MCF 10A (cell line): ENCODE measurements at regions of chr18 and their contacts with region 1.

Region 1: DNA sequence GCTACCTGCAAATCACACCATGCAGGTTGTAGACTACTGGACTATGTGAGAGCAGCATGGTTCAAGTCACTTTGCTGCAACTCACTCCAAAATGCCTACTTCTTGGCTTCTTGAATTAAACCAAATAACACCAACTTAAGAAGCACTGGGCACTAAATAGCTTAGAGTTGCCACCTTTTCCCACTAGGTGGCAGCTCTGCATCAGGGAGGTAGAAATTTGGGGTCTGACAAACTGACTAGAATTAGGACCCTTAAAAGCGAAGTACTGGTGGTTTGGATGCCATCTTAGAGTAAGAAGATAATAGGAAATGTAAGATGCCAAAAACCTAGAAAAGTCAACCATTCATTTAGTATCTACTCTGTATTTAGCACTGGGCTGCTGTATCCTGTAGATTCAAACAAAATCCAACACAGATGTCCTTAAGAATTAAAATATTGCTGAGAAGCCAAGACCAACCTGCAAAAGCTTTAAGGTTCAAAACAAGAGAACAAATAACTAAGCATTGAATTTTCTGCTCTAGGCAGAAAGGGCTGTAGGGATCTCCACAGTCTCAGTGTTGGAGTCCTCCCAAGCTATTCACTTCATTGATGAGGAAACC is 65.5 kb downstream of the CCBE1 start:
- DNase-seq: peak; percentile 48
- H3K4me3 Mint-ChIP-seq: no peak overlapping the region
- H3K27ac Mint-ChIP-seq: no peak overlapping the region
- H3K4me1 Mint-ChIP-seq: no peaks in the 10 kb centered on the region
- H3K27me3 Mint-ChIP-seq: peaks cover 14% of the 10 kb centered on the region
- CTCF ChIP-seq: peak; percentile 78

Region 2: GRCh38 chr18:59446012-59446411 is 185.7 kb before region 1 on chr18:
- CTCF ChIA-PET with region 1: no interaction called
- POLR2A ChIA-PET with region 1: no interaction called
- intact Hi-C with region 1: no loop called
- DNase-seq: peak; percentile 39
- H3K4me3 Mint-ChIP-seq: no peak overlapping the region
- H3K27ac Mint-ChIP-seq: no peak overlapping the region
- H3K4me1 Mint-ChIP-seq: no peaks in the 10 kb centered on the region
- H3K27me3 Mint-ChIP-seq: no peaks in the 10 kb centered on the region
- CTCF ChIP-seq: no peak

Region 3: GRCh38 chr18:59617468-59617932 is 14.2 kb before region 1 on chr18:
- CTCF ChIA-PET with region 1: interaction called, 24 read pairs
- POLR2A ChIA-PET with region 1: interaction called, 6 read pairs
- intact Hi-C with region 1: no loop called
- DNase-seq: peak; percentile 77
- H3K4me3 Mint-ChIP-seq: no peak overlapping the region
- H3K27ac Mint-ChIP-seq: no peak overlapping the region
- H3K4me1 Mint-ChIP-seq: peaks cover 46% of the 10 kb centered on the region
- H3K27me3 Mint-ChIP-seq: no peaks in the 10 kb centered on the region
- CTCF ChIP-seq: no peak

Region 4: GRCh38 chr18:59660786-59661743 is 29.4 kb after region 1 on chr18:
- CTCF ChIA-PET with region 1: interaction called, 28 read pairs
- POLR2A ChIA-PET with region 1: interaction called, 3 read pairs
- intact Hi-C with region 1: no loop called
- DNase-seq: peak; percentile 74
- H3K4me3 Mint-ChIP-seq: no peak overlapping the region
- H3K27ac Mint-ChIP-seq: peak overlapping the region; percentile 67
- H3K4me1 Mint-ChIP-seq: peaks cover 16% of the 10 kb centered on the region
- H3K27me3 Mint-ChIP-seq: no peaks in the 10 kb centered on the region
- CTCF ChIP-seq: no peak

Region 5: DNA sequence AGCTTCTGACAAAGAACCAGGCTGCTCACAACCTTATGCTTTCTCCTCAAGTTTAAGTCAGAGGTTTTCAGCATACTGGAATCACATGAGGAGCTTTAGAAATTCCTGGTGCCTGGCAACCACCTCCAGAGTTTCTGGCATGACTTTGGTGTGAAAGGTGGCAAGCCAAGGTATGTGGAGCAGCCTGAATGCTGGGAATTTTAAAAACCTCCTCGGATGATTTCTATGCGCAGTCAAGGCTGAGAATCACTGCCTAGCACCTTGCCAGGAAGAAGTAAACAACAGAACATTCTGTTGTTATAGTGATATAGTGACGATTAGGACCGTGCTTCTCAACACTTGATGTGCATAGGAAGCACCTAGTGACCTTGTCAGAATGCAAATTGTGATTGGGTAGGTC is 53.8 kb after region 1 on chr18:
- CTCF ChIA-PET with region 1: interaction called, 11 read pairs
- POLR2A ChIA-PET with region 1: interaction called, 3 read pairs
- intact Hi-C with region 1: no loop called
- DNase-seq: no peak
- H3K4me3 Mint-ChIP-seq: no peak overlapping the region
- H3K27ac Mint-ChIP-seq: no peak overlapping the region
- H3K4me1 Mint-ChIP-seq: peaks cover 3% of the 10 kb centered on the region
- H3K27me3 Mint-ChIP-seq: no peaks in the 10 kb centered on the region
- CTCF ChIP-seq: no peak

Region 6: DNA sequence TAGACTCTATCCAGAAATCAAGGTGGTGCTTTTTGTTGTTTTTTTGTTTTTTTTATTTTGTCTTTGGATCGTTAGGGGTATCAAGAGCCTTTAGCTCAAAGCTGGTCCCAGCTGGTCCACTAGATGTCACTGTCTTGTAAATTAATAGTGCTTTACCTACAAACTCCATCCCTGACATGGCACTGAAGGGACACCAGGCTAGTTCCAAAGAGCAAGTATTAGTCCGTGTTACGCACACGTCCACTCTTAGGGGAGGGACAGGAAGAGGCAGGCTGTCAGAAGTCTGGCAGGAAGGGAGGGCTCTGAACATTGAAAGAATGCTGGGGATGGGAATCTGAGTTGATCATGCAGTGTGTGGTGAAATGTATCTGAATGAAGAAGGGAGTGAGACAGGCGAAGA is 151.5 kb after region 1 on chr18:
- CTCF ChIA-PET with region 1: interaction called, 30 read pairs
- POLR2A ChIA-PET with region 1: no interaction called
- intact Hi-C with region 1: loop called (anchors 1 kb)
- DNase-seq: peak; percentile 70
- H3K4me3 Mint-ChIP-seq: no peak overlapping the region
- H3K27ac Mint-ChIP-seq: peak overlapping the region; percentile 0
- H3K4me1 Mint-ChIP-seq: peaks cover 40% of the 10 kb centered on the region
- H3K27me3 Mint-ChIP-seq: no peaks in the 10 kb centered on the region
- CTCF ChIP-seq: peak; percentile 51